CD8-positive, alpha-beta T cell (primary cell): ENCODE measurements at regions of chr2 and their contacts with region 1.

Region 1: DNA sequence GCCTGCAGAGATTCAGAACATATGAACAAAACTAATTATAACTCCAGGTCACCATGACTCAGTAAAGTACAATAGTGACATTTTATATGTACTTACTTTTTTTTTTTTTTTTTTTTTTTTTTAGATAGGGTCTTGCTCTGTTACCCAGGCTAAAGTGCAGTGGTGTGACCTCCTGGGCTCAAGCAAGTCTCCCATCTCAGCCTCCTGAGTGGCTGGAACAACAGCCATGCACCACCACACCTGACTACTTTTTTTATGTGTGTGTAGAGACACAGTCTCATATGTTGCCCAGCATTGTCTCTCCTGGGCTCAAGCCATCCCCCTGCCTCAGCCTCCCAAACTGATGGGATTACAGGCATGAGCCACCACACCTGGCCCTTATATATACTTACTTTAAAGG is 130.7 kb upstream of the B3GNT2 start:
- DNase-seq: no peak
- ATAC-seq: no peak
- H3K4me3 ChIP-seq: no peak overlapping the region
- H3K4me3 Mint-ChIP-seq: no peak overlapping the region
- H3K27ac ChIP-seq: no peak overlapping the region
- H3K27ac Mint-ChIP-seq: no peak overlapping the region
- H3K4me1 ChIP-seq: no peaks in the 10 kb centered on the region
- H3K4me1 Mint-ChIP-seq: no peaks in the 10 kb centered on the region
- H3K27me3 ChIP-seq: no peaks in the 10 kb centered on the region
- H3K27me3 Mint-ChIP-seq: no peaks in the 10 kb centered on the region
- CTCF ChIP-seq: no peak

Region 2: GRCh38 chr2:62089658-62090057 is 24.4 kb after region 1 on chr2:
- CTCF ChIA-PET with region 1: no interaction called
- POLR2A ChIA-PET with region 1: no interaction called
- intact Hi-C with region 1: loop called in 1 of 2 experiments (anchors 2 kb)
- DNase-seq: no peak
- ATAC-seq: no peak
- H3K4me3 ChIP-seq: no peak overlapping the region
- H3K4me3 Mint-ChIP-seq: no peak overlapping the region
- H3K27ac ChIP-seq: no peak overlapping the region
- H3K27ac Mint-ChIP-seq: no peak overlapping the region
- H3K4me1 ChIP-seq: no peaks in the 10 kb centered on the region
- H3K4me1 Mint-ChIP-seq: no peaks in the 10 kb centered on the region
- H3K27me3 ChIP-seq: no peaks in the 10 kb centered on the region
- H3K27me3 Mint-ChIP-seq: no peaks in the 10 kb centered on the region
- CTCF ChIP-seq: no peak